ENCODE measurements at regions of chr12 and their contacts with region 1.

Region 1: GRCh38 chr12:46382964-46383653 is 10.5 kb upstream of the SLC38A2 start:
- DNase-seq: peak; percentile 97
- H3K4me3 ChIP-seq: peak overlapping the region; percentile 39 to 68 (median 44)
- H3K27ac ChIP-seq: peak overlapping the region; percentile 98
- H3K4me1 ChIP-seq: peaks cover 44% of the 10 kb centered on the region
- H3K27me3 ChIP-seq: no peaks in the 10 kb centered on the region
- CTCF ChIP-seq: peak in 1 of 2 donors; percentile 14
- POLR2A ChIP-seq: peak; percentile 76

Region 2: DNA sequence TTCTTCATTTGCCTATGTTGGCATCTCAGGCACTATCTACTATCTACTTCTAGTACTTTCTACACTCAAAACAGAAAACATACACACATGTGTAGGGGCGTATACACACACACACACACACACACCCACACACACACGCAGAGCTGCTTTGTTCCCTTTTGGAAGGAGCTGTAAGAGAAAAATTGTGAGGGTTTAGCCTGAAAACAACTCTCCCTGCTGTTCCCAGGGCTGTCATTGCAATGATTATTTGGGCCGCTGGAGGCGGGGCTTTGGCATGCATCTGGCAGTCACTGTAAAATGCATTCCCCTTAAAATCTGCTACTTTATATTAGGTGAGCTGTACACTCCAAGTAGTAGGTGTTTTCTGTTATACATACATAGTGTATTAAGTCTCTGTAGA is 18.6 kb after region 1 on chr12:
- CTCF ChIA-PET with region 1: no interaction called
- POLR2A ChIA-PET with region 1: no interaction called
- dilution Hi-C with region 1: no loop called
- intact Hi-C with region 1: no loop called
- DNase-seq: peak; percentile 49
- H3K4me3 ChIP-seq: no peak overlapping the region
- H3K27ac ChIP-seq: no peak overlapping the region
- H3K4me1 ChIP-seq: peaks cover 20% of the 10 kb centered on the region
- H3K27me3 ChIP-seq: no peaks in the 10 kb centered on the region
- CTCF ChIP-seq: no peak
- POLR2A ChIP-seq: no peak

Region 3: GRCh38 chr12:46562625-46563228 is 179.6 kb after region 1 on chr12:
- CTCF ChIA-PET with region 1: no interaction called
- POLR2A ChIA-PET with region 1: no interaction called
- dilution Hi-C with region 1: no loop called
- intact Hi-C with region 1: loop called (anchors 1 kb)
- DNase-seq: peak; percentile 94
- H3K4me3 ChIP-seq: peak overlapping the region in 1 of 3 experiments; percentile 28
- H3K27ac ChIP-seq: peak overlapping the region; percentile 96
- H3K4me1 ChIP-seq: peaks cover 24% of the 10 kb centered on the region
- H3K27me3 ChIP-seq: no peaks in the 10 kb centered on the region
- CTCF ChIP-seq: no peak
- POLR2A ChIP-seq: peak; percentile 39